Sigmoid colon (tissue), 7 donors: ENCODE measurements at regions of chr16 and their contacts with region 1.

Region 1: GRCh38 chr16:89720813-89721545 is at the starts of genes VPS9D1 and ZNF276:
- DNase-seq: peak; percentile 88
- H3K4me3 ChIP-seq: peak within 1 kb of the TSS; percentile 74 to 98 (median 77)
- H3K27ac ChIP-seq: peak within 1 kb of the TSS; percentile 96 to 99 (median 98)
- H3K4me1 ChIP-seq: peaks cover 0 to 36% (median 31%) of the 10 kb centered on the region in 4 donors
- H3K27me3 ChIP-seq: no peaks in the 10 kb centered on the region
- CTCF ChIP-seq: no peak
- EP300 ChIP-seq: no peak
- POLR2A ChIP-seq: peak; percentile 37 to 39
- total RNA-seq, gene VPS9D1: 3.8 to 10.5 (median 4.0) TPM
- total RNA-seq, gene ZNF276: 13.7 to 26.9 (median 18.2) TPM

Region 2: GRCh38 chr16:88338111-88338510 is 1382.9 kb before region 1 on chr16:
- intact Hi-C with region 1: no loop called
- DNase-seq: no peak
- H3K4me3 ChIP-seq: no peak overlapping the region
- H3K27ac ChIP-seq: no peak overlapping the region
- H3K4me1 ChIP-seq: no peaks in the 10 kb centered on the region
- H3K27me3 ChIP-seq: peaks cover 0 to 6% (median 0%) of the 10 kb centered on the region in 3 donors
- CTCF ChIP-seq: no peak
- EP300 ChIP-seq: no peak
- POLR2A ChIP-seq: no peak

Region 3: GRCh38 chr16:89383082-89384003 is 337.6 kb before region 1 on chr16:
- intact Hi-C with region 1: no loop called
- DNase-seq: peak; percentile 59
- H3K4me3 ChIP-seq: no peak overlapping the region
- H3K27ac ChIP-seq: no peak overlapping the region
- H3K4me1 ChIP-seq: peaks cover 0 to 71% (median 63%) of the 10 kb centered on the region in 4 donors
- H3K27me3 ChIP-seq: no peaks in the 10 kb centered on the region
- CTCF ChIP-seq: no peak
- EP300 ChIP-seq: no peak
- POLR2A ChIP-seq: no peak

Region 4: DNA sequence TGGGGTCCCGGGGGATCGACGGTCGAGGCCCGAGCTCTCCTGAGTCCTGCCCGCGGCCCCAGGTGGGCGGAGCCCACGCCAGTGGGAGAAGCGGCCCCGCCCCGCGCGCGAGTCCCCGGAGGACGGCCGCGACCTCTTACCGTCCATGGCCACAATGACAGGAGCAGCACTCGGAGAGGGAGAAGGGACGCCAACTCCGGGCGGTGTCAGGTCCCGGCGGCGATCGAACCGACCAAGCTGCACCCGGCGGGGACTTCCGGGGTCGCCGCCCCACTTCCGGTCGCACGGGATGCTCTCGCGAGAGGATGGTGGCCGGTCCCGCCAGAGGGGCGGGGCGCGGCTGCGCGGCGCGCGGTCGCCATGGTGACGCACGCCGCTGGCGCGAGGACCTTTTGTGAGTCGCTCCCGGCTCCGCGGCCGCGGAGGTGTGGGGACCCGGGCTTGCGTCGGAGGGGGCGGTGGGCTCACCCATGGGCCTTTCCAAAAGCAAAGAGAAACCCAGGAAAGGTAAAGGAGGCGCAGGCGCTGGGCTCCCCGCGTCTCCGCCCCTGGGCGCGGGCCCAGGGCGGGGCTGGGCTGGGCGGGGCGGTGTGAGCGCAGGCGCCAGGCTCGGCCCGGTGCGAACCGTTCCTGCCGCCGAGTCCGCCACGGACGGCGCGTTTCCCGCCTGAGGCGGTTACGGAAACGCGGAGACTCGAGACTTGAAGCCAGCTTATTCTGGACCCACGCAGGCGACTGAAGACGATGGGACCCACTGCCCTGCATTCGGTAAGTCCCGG is 63.3 kb before region 1 on chr16 and contains the starts of genes CHMP1A and SPATA33:
- intact Hi-C with region 1: loop called (anchors 5 kb)
- DNase-seq: peak; percentile 94
- H3K4me3 ChIP-seq: peak within 1 kb of the TSS; percentile 93 to 99 (median 97)
- H3K27ac ChIP-seq: peak within 1 kb of the TSS; percentile 83 to 86 (median 84)
- H3K4me1 ChIP-seq: peaks cover 0 to 28% (median 23%) of the 10 kb centered on the region in 4 donors
- H3K27me3 ChIP-seq: no peaks in the 10 kb centered on the region
- CTCF ChIP-seq: no peak
- EP300 ChIP-seq: no peak
- POLR2A ChIP-seq: peak; percentile 23 to 25
- total RNA-seq, gene CHMP1A: 42.8 to 75.9 (median 59.3) TPM
- total RNA-seq, gene SPATA33: 1.4 to 7.7 (median 5.9) TPM

Region 5: DNA sequence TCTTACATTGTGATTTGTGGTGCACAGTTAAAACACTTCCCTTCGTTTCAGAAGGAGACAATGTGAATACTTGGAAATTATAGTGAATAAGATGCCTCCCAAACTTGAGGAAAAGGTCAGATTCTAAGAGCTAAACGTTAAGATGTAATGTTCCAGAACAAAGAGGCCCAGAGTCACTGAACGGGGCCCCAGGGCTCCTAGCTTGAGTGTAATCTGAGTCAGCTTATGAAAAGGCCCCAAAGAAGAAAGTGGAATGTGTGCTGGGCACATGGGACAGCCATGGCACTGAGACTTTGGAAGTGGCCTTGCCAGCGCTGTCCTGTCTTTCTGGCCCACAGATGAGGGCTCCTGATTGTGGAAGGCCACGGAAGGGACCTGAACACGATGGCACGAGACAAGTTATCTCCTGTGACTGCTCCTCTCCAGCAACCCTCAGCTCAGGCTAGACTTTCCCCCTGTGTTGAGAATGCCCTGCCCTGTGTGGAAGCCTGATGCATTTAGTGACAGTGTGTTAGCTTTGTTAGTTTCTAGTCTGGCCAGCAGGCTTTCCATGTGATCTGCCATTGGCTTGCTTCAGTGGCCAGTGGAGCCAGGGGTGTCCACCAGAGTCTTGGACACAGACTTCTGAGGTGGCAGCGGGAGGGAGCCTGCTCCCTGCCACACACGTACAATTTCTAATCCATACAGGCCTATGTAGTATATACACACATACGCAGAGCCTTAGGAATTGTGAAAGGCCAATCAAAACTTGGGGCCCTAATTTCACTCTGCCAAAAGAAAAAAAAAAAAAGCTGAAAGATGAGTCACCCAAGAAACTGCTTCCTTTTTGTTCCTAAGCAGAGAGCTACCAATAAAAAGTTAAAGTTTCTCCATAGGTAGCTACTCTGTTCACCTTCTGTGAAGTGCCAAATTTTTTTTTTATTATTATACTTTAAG is 50.2 kb before region 1 on chr16:
- intact Hi-C with region 1: no loop called
- DNase-seq: no peak
- H3K4me3 ChIP-seq: no peak overlapping the region
- H3K27ac ChIP-seq: no peak overlapping the region
- H3K4me1 ChIP-seq: no peaks in the 10 kb centered on the region
- H3K27me3 ChIP-seq: no peaks in the 10 kb centered on the region
- CTCF ChIP-seq: no peak
- EP300 ChIP-seq: no peak
- POLR2A ChIP-seq: no peak